CD4-positive, alpha-beta memory T cell (primary cell): ENCODE measurements at regions of chr1 and their contacts with region 1.

Region 1: DNA sequence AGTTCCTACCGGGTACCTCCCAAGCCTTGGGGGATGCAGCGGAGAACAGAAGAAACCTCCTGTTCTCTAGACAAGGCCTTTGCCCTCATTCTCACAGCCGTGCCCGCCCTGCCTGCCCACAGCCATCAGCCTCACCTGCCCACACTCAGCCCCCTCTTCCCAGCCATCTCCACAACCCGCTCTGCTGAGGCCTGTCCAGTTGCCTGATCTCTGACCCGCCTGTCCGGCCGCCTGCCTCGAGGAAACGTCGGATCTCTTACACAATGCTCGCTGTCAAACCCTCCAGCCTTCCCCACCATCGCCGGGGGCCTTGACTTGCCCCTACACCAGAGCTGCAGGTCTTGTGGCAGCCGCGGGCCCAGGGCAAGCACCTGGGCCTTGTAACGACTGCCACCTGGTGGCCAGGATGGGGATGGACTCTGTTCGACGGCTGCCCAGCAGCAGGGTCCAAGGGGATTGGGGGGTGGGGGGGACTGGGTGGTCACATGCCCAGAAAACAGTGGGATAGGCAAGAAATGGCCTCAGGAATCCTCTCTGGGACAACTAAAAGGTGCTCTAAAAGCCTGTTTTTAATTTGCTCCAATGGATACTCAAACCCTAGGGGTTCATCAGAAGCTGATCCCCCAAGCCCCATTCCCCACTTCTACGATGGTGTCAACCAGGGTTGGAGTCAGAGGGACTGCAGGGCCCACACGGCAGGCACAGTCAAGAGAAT is 31.0 kb downstream of the SLC45A1 start:
- DNase-seq: peak; percentile 58 to 71 (median 64)
- H3K4me3 ChIP-seq: no peak overlapping the region
- H3K4me3 Mint-ChIP-seq: no peak overlapping the region
- H3K27ac ChIP-seq: no peak overlapping the region
- H3K27ac Mint-ChIP-seq: peak overlapping the region in 3 of 7 donors; percentile 13 to 61 (median 59)
- H3K4me1 ChIP-seq: no peaks in the 10 kb centered on the region
- H3K4me1 Mint-ChIP-seq: peaks cover 2 to 14% (median 4%) of the 10 kb centered on the region in 4 donors
- H3K27me3 ChIP-seq: no peaks in the 10 kb centered on the region
- H3K27me3 Mint-ChIP-seq: peaks cover 0 to 2% of the 10 kb centered on the region in 2 donors

Region 2: GRCh38 chr1:7808253-7808844 is 540.6 kb before region 1 on chr1:
- CTCF ChIA-PET with region 1: no interaction called
- POLR2A ChIA-PET with region 1: no interaction called
- intact Hi-C with region 1: loop called (anchors 5 kb)
- DNase-seq: peak in 2 of 5 donors; percentile 14 to 15
- H3K4me3 ChIP-seq: no peak overlapping the region
- H3K4me3 Mint-ChIP-seq: no peak overlapping the region
- H3K27ac ChIP-seq: no peak overlapping the region
- H3K27ac Mint-ChIP-seq: no peak overlapping the region
- H3K4me1 ChIP-seq: no peaks in the 10 kb centered on the region
- H3K4me1 Mint-ChIP-seq: no peaks in the 10 kb centered on the region
- H3K27me3 ChIP-seq: no peaks in the 10 kb centered on the region
- H3K27me3 Mint-ChIP-seq: no peaks in the 10 kb centered on the region

Region 3: DNA sequence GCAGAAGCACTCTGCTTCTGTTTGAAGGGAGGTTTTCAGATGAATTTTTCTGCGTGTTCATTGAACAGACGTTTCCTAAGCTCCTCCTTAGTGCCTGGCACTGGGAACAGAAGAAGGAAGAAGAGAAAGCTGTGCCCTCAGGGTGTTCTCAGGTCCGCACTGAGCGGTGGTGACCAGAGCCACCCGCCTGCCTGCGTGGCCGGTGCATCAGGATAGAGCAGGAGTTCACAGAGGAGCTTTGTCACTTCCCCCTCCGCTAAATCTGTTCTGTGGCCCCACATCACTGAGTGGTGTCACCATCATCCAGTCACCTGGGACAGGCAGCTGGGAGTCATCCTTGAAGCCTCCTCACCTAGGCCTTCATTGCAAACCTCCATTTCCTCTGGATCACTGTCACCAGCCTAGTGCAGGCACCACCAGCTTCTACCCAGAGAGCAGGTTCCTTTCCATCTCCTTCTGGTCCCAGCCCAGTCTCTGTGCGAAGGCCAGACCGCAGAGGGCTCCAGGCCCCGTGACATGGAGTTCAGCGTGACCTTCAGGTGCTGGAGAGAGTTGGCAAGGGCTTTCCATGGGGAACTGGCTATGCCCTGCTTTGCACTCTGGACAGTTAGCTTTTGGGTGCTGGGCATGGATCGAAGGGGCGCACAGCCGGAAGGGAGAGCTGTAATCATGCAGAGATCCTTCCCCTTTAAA is 365.7 kb before region 1 on chr1:
- CTCF ChIA-PET with region 1: interaction called, 8 read pairs
- POLR2A ChIA-PET with region 1: no interaction called
- intact Hi-C with region 1: loop called (anchors 1 kb)
- DNase-seq: no peak
- H3K4me3 ChIP-seq: no peak overlapping the region
- H3K4me3 Mint-ChIP-seq: no peak overlapping the region
- H3K27ac ChIP-seq: no peak overlapping the region
- H3K27ac Mint-ChIP-seq: peak overlapping the region in 1 of 7 donors; percentile 62
- H3K4me1 ChIP-seq: peaks cover 5% of the 10 kb centered on the region
- H3K4me1 Mint-ChIP-seq: peaks cover 6 to 10% (median 8%) of the 10 kb centered on the region in 4 donors
- H3K27me3 ChIP-seq: no peaks in the 10 kb centered on the region
- H3K27me3 Mint-ChIP-seq: no peaks in the 10 kb centered on the region

Region 4: GRCh38 chr1:8015036-8015808 is 333.7 kb before region 1 on chr1:
- CTCF ChIA-PET with region 1: interaction called, 100 read pairs
- POLR2A ChIA-PET with region 1: interaction called, 6 read pairs
- intact Hi-C with region 1: loop called (anchors 1 kb)
- DNase-seq: peak in 4 of 5 donors; percentile 55 to 59 (median 58)
- H3K4me3 ChIP-seq: no peak overlapping the region
- H3K4me3 Mint-ChIP-seq: no peak overlapping the region
- H3K27ac ChIP-seq: no peak overlapping the region
- H3K27ac Mint-ChIP-seq: no peak overlapping the region
- H3K4me1 ChIP-seq: no peaks in the 10 kb centered on the region
- H3K4me1 Mint-ChIP-seq: peaks cover 0 to 1% (median under 1%) of the 10 kb centered on the region in 4 donors
- H3K27me3 ChIP-seq: no peaks in the 10 kb centered on the region
- H3K27me3 Mint-ChIP-seq: peaks cover 10 to 18% of the 10 kb centered on the region in 2 donors

Region 5: GRCh38 chr1:8314346-8315280 is 34.3 kb before region 1 on chr1:
- CTCF ChIA-PET with region 1: interaction called, 22 read pairs
- POLR2A ChIA-PET with region 1: no interaction called
- intact Hi-C with region 1: no loop called
- DNase-seq: peak; percentile 44 to 53 (median 50)
- H3K4me3 ChIP-seq: no peak overlapping the region
- H3K4me3 Mint-ChIP-seq: peak overlapping the region in 1 of 8 donors; percentile 55
- H3K27ac ChIP-seq: no peak overlapping the region
- H3K27ac Mint-ChIP-seq: peak overlapping the region in 1 of 7 donors; percentile 69
- H3K4me1 ChIP-seq: peaks cover 11% of the 10 kb centered on the region
- H3K4me1 Mint-ChIP-seq: peaks cover 4 to 30% (median 16%) of the 10 kb centered on the region in 4 donors
- H3K27me3 ChIP-seq: peaks cover 8% of the 10 kb centered on the region
- H3K27me3 Mint-ChIP-seq: peaks cover 16 to 24% of the 10 kb centered on the region in 2 donors